Panc1 (cell line): ENCODE measurements at regions of chr6 and their contacts with region 1.

Region 1: DNA sequence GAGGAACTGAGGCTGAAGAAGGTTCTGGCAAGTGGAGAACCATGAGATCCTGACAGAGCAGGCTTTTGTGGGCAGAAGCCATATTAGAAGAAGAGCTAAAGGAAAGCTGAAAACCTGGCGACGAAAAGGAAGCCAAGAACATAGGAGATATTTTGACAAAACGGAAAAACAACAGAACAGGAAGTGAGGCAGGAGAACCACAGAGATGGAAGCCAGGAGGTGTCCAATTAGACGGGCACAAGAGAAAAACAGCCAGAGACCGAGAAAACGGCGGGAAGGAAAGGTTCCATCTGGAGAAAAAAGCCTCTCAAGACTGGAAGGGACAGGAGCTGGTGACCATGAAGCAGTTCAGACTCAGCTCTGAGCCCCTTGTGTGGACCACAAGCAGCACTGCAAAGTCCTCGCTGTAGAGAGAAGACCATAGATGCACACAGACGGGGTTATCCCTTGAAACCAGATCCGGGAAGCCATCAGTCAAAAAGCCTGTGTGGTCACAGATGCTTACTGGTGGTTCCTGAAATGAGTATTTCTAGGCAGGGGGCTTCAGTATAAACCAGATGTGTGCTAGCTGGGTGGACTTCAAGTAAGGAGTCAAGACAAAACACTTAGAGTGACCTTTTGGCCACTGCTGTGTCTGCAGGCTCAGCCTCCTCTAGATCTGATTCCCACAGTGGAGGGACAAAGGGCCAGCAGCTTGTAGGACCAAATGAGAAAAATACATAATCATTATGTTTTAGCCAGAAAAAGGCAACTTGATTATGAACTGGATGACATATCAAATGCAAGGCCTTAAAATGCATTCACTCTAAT is 30.7 kb downstream of the SSR1 start:
- DNase-seq: no peak
- ATAC-seq: no peak
- H3K4me3 ChIP-seq: no peak overlapping the region
- H3K27ac ChIP-seq: no peak overlapping the region
- H3K4me1 ChIP-seq: no peaks in the 10 kb centered on the region
- H3K27me3 ChIP-seq: no peaks in the 10 kb centered on the region
- CTCF ChIP-seq: no peak

Region 2: DNA sequence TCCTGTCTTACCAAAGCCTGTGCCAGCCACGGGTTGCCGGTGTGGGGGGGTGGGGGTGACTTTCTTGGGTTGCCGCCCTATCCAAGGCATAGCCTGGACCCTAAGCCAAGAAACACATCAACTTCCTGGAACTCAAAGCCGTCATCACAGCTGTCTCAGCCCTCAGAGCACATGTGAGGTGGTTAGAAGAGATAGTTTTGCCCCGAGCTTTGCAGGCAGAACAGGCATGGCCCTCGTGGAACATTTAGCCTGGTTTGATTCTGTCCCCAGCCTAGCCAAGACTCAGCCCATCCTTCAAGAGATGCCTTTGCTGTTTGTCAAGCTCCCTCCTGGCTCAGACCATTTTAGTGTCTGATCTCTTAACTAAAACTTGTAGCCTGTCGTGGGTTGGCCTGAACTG is 109.7 kb before region 1 on chr6:
- CTCF ChIA-PET with region 1: no interaction called
- POLR2A ChIA-PET with region 1: no interaction called
- in situ Hi-C with region 1: no loop called
- intact Hi-C with region 1: no loop called
- DNase-seq: no peak
- ATAC-seq: 0 out of 2 replicates have a peak, but pooled peaks have one; percentile 29
- H3K4me3 ChIP-seq: no peak overlapping the region
- H3K27ac ChIP-seq: no peak overlapping the region
- H3K4me1 ChIP-seq: peaks cover 19% of the 10 kb centered on the region
- H3K27me3 ChIP-seq: no peaks in the 10 kb centered on the region
- CTCF ChIP-seq: no peak

Region 3: GRCh38 chr6:7270320-7271204 is 11.7 kb before region 1 on chr6:
- CTCF ChIA-PET with region 1: interaction called, 10 read pairs
- POLR2A ChIA-PET with region 1: no interaction called
- in situ Hi-C with region 1: no loop called
- intact Hi-C with region 1: no loop called
- DNase-seq: no peak
- ATAC-seq: no peak
- H3K4me3 ChIP-seq: no peak overlapping the region
- H3K27ac ChIP-seq: no peak overlapping the region
- H3K4me1 ChIP-seq: no peaks in the 10 kb centered on the region
- H3K27me3 ChIP-seq: no peaks in the 10 kb centered on the region
- CTCF ChIP-seq: no peak